CD4-positive, alpha-beta memory T cell (primary cell): ENCODE measurements at regions of chr11 and their contacts with region 1.

Region 1: DNA sequence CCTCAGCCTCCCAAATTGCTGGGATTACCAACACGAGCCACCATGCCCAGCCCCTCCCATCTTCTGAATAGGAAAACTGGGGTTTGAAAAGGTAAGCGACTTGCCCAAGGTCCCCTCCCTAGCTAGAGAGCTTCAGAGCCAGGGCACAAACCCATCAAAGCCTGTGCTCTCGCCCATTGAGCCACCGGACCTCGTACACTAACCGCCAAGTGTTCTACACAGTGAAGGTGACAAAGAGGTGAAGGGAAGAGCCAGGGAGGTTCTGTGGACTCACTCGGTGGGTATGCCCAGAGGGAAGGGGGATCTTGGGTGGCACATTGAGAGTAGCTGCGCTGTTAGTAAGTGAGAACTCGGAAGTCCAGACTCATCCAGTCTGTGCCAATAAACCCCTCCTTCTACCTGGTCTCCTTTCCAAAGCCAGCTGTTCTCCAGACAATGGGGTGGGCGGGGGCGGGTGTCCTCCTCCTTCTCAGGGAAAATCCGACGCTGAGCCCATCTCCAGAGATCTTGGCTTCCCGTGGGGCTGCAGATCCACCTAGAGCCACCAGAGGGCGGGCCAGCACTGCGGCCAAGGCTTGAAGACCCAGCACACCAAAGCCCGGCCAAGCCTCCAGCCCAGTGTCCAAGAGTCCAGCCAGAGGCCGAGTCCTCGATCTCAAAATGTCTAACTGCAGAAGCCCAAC is 3.2 kb upstream of the RTN4RL2 start:
- DNase-seq: peak; percentile 59 to 72 (median 62)
- H3K4me3 ChIP-seq: peak overlapping the region in 1 of 2 donors; percentile 3
- H3K4me3 Mint-ChIP-seq: peak overlapping the region; percentile 60 to 93 (median 70)
- H3K27ac ChIP-seq: no peak overlapping the region
- H3K27ac Mint-ChIP-seq: peak overlapping the region in 5 of 7 donors; percentile 32 to 83 (median 73)
- H3K4me1 ChIP-seq: peaks cover 40% of the 10 kb centered on the region
- H3K4me1 Mint-ChIP-seq: peaks cover 16 to 31% (median 24%) of the 10 kb centered on the region in 4 donors
- H3K27me3 ChIP-seq: peaks cover 17% of the 10 kb centered on the region
- H3K27me3 Mint-ChIP-seq: peaks cover 20 to 28% of the 10 kb centered on the region in 2 donors

Region 2: DNA sequence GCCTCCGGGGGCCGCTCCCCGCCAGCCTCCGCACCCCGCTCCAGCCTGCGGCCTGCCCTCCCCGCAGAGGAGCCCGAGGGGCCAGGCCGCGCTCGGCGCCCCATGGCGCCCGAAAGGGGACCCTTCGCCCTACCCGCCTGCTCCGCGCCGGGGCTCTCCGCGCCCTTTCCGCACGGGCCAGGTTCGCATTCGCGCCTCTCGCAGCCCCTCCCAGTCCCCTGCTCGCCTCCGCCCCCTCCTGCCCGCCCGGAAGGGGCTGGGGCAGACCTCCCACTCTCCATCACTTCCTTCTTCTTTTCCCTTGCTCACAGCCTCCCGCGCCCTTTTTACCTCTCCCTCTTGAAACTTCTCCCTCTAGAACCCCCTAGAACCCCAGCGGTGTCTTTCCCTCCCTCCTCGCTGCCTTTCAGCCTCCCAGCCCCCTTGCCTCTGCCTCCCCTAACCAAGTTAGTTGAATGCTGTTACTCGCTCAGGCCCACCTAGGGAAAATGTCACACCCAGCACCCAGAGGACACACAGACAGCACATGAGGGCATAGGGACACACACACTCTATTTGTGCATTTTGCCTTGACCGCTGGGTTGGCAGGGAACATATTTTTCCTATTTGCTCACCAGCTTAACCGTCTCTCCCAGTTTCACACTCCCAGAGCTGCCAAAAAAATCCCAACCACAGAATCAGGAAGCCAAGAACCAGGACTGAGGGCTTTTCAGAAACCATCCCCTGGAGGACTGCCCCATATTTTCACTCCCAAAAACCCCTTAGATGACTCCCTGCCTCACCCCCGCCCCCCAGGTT is 30.0 kb before region 1 on chr11 and contains the start of gene SLC43A3:
- CTCF ChIA-PET with region 1: interaction called, 56 read pairs
- POLR2A ChIA-PET with region 1: interaction called, 3 read pairs
- intact Hi-C with region 1: loop called (anchors 2 kb)
- DNase-seq: peak; percentile 36 to 62 (median 37)
- H3K4me3 ChIP-seq: peak within 1 kb of the TSS; percentile 32 to 58
- H3K4me3 Mint-ChIP-seq: peak within 1 kb of the TSS; percentile 83 to 93 (median 88)
- H3K27ac ChIP-seq: peak within 1 kb of the TSS; percentile 45
- H3K27ac Mint-ChIP-seq: peak within 1 kb of the TSS; percentile 78 to 94 (median 90)
- H3K4me1 ChIP-seq: peaks cover 34% of the 10 kb centered on the region
- H3K4me1 Mint-ChIP-seq: peaks cover 33 to 56% (median 40%) of the 10 kb centered on the region in 4 donors
- H3K27me3 ChIP-seq: no peaks in the 10 kb centered on the region
- H3K27me3 Mint-ChIP-seq: no peaks in the 10 kb centered on the region
- total RNA-seq, gene SLC43A3: 15.1 to 15.6 TPM

Region 3: GRCh38 chr11:57474017-57474802 is 17.1 kb after region 1 on chr11:
- CTCF ChIA-PET with region 1: interaction called, 169 read pairs
- POLR2A ChIA-PET with region 1: interaction called, 3 read pairs
- intact Hi-C with region 1: no loop called
- DNase-seq: peak in 2 of 5 donors; percentile 17 to 18
- H3K4me3 ChIP-seq: no peak overlapping the region
- H3K4me3 Mint-ChIP-seq: peak overlapping the region in 7 of 8 donors; percentile 19 to 81 (median 66)
- H3K27ac ChIP-seq: no peak overlapping the region
- H3K27ac Mint-ChIP-seq: peak overlapping the region in 3 of 7 donors; percentile 44 to 81 (median 76)
- H3K4me1 ChIP-seq: peaks cover 24% of the 10 kb centered on the region
- H3K4me1 Mint-ChIP-seq: peaks cover 9 to 37% (median 19%) of the 10 kb centered on the region in 4 donors
- H3K27me3 ChIP-seq: peaks cover 5% of the 10 kb centered on the region
- H3K27me3 Mint-ChIP-seq: peaks cover 0 to 7% of the 10 kb centered on the region in 2 donors

Region 4: GRCh38 chr11:57508341-57509170 is 51.5 kb after region 1 on chr11:
- CTCF ChIA-PET with region 1: interaction called, 46 read pairs
- POLR2A ChIA-PET with region 1: no interaction called
- intact Hi-C with region 1: no loop called
- DNase-seq: no peak
- H3K4me3 ChIP-seq: no peak overlapping the region
- H3K4me3 Mint-ChIP-seq: no peak overlapping the region
- H3K27ac ChIP-seq: no peak overlapping the region
- H3K27ac Mint-ChIP-seq: no peak overlapping the region
- H3K4me1 ChIP-seq: peaks cover 9% of the 10 kb centered on the region
- H3K4me1 Mint-ChIP-seq: peaks cover 14 to 26% (median 18%) of the 10 kb centered on the region in 4 donors
- H3K27me3 ChIP-seq: no peaks in the 10 kb centered on the region
- H3K27me3 Mint-ChIP-seq: no peaks in the 10 kb centered on the region

Region 5: GRCh38 chr11:57800444-57801182 is 343.5 kb after region 1 on chr11:
- CTCF ChIA-PET with region 1: interaction called, 21 read pairs
- POLR2A ChIA-PET with region 1: no interaction called
- intact Hi-C with region 1: loop called (anchors 1 kb)
- DNase-seq: peak in 4 of 5 donors; percentile 57 to 65 (median 64)
- H3K4me3 ChIP-seq: no peak overlapping the region
- H3K4me3 Mint-ChIP-seq: peak overlapping the region in 6 of 8 donors; percentile 7 to 69 (median 22)
- H3K27ac ChIP-seq: peak overlapping the region; percentile 24
- H3K27ac Mint-ChIP-seq: peak overlapping the region; percentile 65 to 94 (median 89)
- H3K4me1 ChIP-seq: peaks cover 27% of the 10 kb centered on the region
- H3K4me1 Mint-ChIP-seq: peaks cover 10 to 29% (median 21%) of the 10 kb centered on the region in 4 donors
- H3K27me3 ChIP-seq: no peaks in the 10 kb centered on the region
- H3K27me3 Mint-ChIP-seq: no peaks in the 10 kb centered on the region